ENCODE measurements at regions of chr2 and their contacts with region 1.

Region 1: GRCh38 chr2:105166688-105167087 is 74.9 kb upstream of the GPR45 start:
- DNase-seq: no peak
- H3K4me3 Mint-ChIP-seq: no peak overlapping the region
- H3K27ac Mint-ChIP-seq: no peak overlapping the region
- H3K4me1 Mint-ChIP-seq: no peaks in the 10 kb centered on the region
- H3K27me3 Mint-ChIP-seq: peaks cover 12% of the 10 kb centered on the region
- CTCF ChIP-seq: no peak

Region 2: DNA sequence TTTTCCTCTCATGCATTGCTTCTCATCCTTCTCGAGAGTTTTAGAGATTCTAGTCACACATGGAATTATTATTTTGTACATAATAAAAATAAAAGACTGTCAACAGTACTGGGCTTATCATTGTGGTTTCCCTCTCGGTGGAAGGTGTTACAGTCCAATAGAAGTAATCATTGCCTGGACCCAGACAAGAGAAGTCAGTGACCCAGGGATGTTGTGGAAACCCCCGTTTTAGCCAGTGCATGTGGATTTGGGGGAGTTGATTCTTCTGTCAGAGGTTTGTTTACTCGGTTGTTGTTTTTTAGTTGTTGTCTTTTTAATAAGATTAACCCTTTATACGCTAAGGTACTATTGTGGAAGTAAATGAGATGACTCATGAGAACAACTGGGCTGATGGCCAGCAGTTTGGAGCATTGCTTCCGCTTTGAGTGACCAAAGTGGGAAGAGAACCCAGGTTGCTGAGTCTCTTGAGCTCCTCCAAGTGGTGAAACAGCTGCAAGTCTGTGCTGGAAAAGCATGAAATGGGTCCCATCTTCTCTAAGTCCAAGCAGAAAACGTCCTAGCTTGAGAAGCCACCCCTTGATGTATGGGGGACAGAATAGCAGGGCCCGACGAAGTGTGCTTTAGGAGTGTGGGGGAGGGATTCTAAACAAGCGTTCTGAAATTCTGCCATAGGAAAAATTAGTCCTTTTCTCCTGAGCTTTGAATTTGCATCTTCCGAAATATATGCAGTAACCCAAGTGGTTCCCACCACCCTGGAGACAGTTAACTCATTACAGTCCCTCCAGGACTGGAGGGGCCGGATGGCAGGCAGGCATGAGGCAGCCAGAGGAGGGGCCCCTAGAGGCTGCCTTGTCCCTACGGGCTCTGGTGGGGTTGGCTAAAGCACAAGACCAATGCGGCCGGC is 13.0 kb after region 1 on chr2:
- CTCF ChIA-PET with region 1: interaction called, 16 read pairs
- POLR2A ChIA-PET with region 1: no interaction called
- intact Hi-C with region 1: no loop called
- DNase-seq: peak; percentile 93
- H3K4me3 Mint-ChIP-seq: no peak overlapping the region
- H3K27ac Mint-ChIP-seq: no peak overlapping the region
- H3K4me1 Mint-ChIP-seq: peaks cover 5% of the 10 kb centered on the region
- H3K27me3 Mint-ChIP-seq: peaks cover 27% of the 10 kb centered on the region
- CTCF ChIP-seq: peak; percentile 47

Measured in MCF 10A (cell line).